ENCODE measurements at regions of chr13 and their contacts with region 1.

Region 1: DNA sequence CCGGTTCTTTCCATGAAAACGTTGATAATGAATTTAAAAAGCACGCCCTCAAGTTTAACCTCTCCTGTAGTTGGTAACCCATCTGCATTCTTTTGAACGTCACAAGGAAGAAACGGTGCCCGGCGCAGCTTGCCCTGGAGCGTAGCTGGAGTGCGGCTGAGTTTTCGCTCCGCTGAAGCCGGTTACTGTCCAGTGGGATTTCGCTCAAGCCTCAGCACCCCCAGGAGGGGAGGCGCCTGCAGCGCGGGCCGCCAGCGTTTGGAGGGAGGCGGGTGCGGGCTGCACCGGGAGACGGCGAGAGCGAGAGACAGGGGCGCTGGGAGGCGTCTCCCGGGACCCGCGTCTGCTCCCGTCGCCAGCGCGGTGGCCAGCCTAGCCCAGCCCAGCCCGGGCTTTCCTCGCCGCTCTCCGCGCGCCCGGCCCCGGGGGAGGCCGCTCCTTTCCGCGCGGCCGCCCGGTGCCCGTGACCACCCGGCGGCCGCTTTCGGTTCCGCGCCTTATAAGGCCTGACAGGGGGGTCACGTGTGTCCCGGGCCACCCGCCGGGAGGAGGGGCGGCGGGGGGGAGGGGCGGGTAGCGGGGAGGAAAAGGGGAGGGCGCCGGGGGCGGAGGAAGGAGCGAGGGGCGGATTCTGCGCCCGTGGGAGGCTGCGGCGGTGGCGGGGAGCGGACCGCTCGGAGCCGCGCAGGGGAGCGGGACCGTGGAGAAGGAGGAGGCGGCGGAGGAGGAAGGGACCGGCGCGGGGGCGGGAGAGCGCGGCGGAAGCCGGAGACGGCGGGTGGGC is 8.3 kb upstream of the DGKH start:
- DNase-seq: peak; percentile 94 to 96
- ATAC-seq: peak; percentile 95 to 96 (median 96)
- H3K4me3 ChIP-seq: peak overlapping the region; percentile 81
- H3K27ac ChIP-seq: peak overlapping the region; percentile 97
- H3K4me1 ChIP-seq: no peaks in the 10 kb centered on the region
- H3K27me3 ChIP-seq: no peaks in the 10 kb centered on the region
- CTCF ChIP-seq: no peak

Region 2: GRCh38 chr13:41668130-41668757 is 371.9 kb before region 1 on chr13:
- intact Hi-C with region 1: loop called in 1 of 2 experiments (anchors 10 kb)
- DNase-seq: peak in 1 of 2 donors; percentile 18
- ATAC-seq: peak; percentile 95 to 99 (median 98)
- H3K4me3 ChIP-seq: no peak overlapping the region
- H3K27ac ChIP-seq: no peak overlapping the region
- H3K4me1 ChIP-seq: peaks cover 9% of the 10 kb centered on the region
- H3K27me3 ChIP-seq: no peaks in the 10 kb centered on the region
- CTCF ChIP-seq: peak; percentile 77

Region 3: GRCh38 chr13:41905600-41906254 is 134.4 kb before region 1 on chr13:
- intact Hi-C with region 1: loop called in 1 of 2 experiments (anchors 5 kb)
- DNase-seq: no peak
- ATAC-seq: peak; percentile 61 to 91 (median 80)
- H3K4me3 ChIP-seq: no peak overlapping the region
- H3K27ac ChIP-seq: no peak overlapping the region
- H3K4me1 ChIP-seq: no peaks in the 10 kb centered on the region
- H3K27me3 ChIP-seq: no peaks in the 10 kb centered on the region
- CTCF ChIP-seq: peak; percentile 64

Region 4: GRCh38 chr13:41955605-41956004 is 84.5 kb before region 1 on chr13:
- intact Hi-C with region 1: loop called (anchors 5 kb)
- DNase-seq: peak in 1 of 2 donors; percentile 54
- ATAC-seq: peak; percentile 59 to 68 (median 65)
- H3K4me3 ChIP-seq: peak overlapping the region; percentile 11
- H3K27ac ChIP-seq: peak overlapping the region; percentile 63
- H3K4me1 ChIP-seq: peaks cover 37% of the 10 kb centered on the region
- H3K27me3 ChIP-seq: no peaks in the 10 kb centered on the region
- CTCF ChIP-seq: no peak

Region 5: DNA sequence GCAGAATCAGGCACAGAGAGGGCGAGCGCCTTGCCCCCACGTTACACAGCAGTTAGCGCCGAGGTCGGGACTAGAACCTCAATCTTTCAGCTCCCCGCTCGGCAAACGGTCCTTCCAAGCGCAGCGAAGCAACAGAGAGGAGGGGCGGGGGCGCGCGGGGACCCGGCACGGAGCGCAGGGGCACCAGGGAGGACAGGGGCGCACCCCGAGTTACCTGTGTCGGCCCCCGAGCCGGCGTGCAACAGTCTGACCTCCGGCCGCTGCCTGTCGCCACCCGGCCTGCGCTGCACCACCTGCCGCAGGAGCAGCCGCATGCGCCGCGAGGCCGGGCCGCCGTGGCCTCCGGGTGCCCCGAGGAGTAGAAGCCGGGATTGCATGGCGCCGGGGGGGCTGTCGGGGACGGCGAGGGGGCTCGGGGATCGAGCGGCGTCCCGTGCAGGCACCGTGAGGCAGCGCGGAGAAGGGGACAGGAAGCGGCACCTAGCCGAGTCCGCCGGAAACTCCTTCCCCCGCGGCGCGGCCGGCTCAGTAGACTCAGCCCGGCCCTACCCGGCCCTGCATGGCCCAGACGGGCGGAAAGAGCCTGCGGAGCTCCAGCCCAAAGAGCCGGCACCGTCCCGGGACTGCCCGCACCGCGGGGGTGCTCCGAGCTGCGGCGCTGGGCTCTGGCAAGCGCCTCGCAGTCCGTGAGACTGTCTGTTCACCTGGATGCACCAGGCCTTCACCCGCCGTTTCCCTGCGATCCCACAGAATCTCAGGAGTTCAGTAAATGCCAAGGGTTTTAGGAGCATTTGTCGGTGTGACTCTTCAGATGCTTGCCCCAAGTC is 79.3 kb before region 1 on chr13 and contains the start of gene VWA8:
- intact Hi-C with region 1: loop called (anchors 5 kb)
- DNase-seq: peak; percentile 88 to 91
- ATAC-seq: peak; percentile 95 to 96 (median 96)
- H3K4me3 ChIP-seq: peak within 1 kb of the TSS; percentile 96
- H3K27ac ChIP-seq: peak within 1 kb of the TSS; percentile 89
- H3K4me1 ChIP-seq: peaks cover 16% of the 10 kb centered on the region
- H3K27me3 ChIP-seq: no peaks in the 10 kb centered on the region
- CTCF ChIP-seq: no peak
- total RNA-seq, gene VWA8: 30.1 to 50.5 (median 41.4) TPM

Region 6: DNA sequence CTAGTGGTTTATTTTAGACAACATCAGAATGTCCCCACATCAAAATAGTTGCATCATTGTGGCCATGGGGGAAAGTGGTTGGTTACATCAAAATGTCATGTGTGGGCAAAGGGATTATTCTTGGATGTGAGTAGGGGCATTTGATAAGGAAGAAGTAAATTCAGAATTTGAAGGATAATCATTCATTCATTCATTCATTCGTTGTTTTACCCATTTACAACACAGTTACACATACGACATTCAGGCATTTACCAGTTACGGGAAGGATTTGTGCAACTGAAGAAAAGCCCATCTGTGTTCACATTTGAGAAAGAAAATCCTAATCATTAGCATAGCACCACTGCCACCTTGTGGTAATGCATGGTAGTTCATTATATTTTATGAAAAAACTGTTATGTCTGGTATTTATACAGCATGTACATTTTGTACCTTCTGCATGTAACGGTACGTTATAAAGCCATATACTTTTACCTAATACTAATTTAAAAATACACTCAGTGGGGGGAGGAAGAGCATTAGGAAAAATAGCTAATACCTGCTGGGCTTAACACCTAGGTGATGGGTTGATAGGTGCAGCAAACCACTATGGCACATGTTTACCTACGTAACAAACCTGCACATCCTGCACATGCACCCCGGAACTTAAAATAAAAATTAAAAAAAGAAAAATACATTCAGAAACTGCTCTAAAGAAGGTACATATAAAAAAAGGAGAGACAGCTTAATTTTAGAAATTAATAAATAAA is 70.4 kb after region 1 on chr13:
- intact Hi-C with region 1: loop called in 1 of 2 experiments (anchors 5 kb)
- DNase-seq: no peak
- ATAC-seq: peak; percentile 58 to 88 (median 65)
- H3K4me3 ChIP-seq: no peak overlapping the region
- H3K27ac ChIP-seq: no peak overlapping the region
- H3K4me1 ChIP-seq: peaks cover 8% of the 10 kb centered on the region
- H3K27me3 ChIP-seq: no peaks in the 10 kb centered on the region
- CTCF ChIP-seq: peak; percentile 92

Region 7: GRCh38 chr13:42333613-42334328 is 293.6 kb after region 1 on chr13:
- intact Hi-C with region 1: no loop called
- DNase-seq: no peak
- ATAC-seq: no peak
- H3K4me3 ChIP-seq: no peak overlapping the region
- H3K27ac ChIP-seq: no peak overlapping the region
- H3K4me1 ChIP-seq: no peaks in the 10 kb centered on the region
- H3K27me3 ChIP-seq: no peaks in the 10 kb centered on the region
- CTCF ChIP-seq: no peak

Measured in psoas muscle (tissue), 8 donors.